ENCODE measurements at regions of chr17 and their contacts with region 1.

Region 1: DNA sequence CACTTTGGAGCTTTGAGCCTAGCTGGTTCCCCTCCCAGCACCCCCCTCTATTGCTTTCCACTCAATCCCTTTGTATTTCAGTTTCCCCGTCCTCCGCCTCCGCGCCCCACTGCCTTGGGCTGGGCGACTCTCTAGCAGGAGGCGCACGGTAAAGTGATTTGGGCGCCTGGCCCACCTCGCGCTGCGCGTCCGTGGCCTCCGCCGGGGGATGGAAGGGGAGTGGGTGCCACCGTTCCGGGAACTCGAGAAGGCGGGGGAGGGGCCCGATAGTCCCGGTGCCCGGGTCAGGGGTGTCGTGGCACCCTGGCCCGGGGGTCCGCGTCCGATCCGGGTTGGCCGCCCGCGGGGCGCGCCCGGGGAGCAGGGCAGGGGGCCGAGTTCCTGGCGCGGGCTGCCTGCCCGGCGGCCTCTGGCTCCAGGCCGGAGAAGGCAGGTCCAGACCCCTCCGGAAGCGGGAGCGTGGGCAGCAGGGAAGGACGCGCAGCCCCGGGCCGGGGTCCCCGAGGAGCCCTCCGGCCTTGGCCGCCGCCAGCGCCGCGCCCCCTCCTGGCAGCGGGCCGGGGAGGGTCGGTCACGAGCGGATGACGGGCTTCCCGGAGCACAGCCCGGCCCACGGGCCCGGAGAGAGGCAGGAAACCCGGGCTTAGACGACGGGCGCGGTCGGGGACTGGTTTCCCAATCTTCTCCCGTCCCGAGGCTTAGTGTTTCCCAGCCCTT is 15.8 kb downstream of the MEOX1 start:
- DNase-seq: peak; percentile 86
- ATAC-seq: peak; percentile 79 to 89 (median 88)
- H3K4me3 ChIP-seq: peak overlapping the region in 9 of 10 donors; percentile 36 to 56 (median 48)
- H3K27ac ChIP-seq: peak overlapping the region; percentile 86 to 97 (median 93)
- H3K4me1 ChIP-seq: peaks cover 0 to 82% (median 33%) of the 10 kb centered on the region in 9 donors
- H3K27me3 ChIP-seq: peaks cover 0 to 20% (median 0%) of the 10 kb centered on the region in 7 donors
- CTCF ChIP-seq: peak in 3 of 9 donors; percentile 11 to 43 (median 29)

Region 2: DNA sequence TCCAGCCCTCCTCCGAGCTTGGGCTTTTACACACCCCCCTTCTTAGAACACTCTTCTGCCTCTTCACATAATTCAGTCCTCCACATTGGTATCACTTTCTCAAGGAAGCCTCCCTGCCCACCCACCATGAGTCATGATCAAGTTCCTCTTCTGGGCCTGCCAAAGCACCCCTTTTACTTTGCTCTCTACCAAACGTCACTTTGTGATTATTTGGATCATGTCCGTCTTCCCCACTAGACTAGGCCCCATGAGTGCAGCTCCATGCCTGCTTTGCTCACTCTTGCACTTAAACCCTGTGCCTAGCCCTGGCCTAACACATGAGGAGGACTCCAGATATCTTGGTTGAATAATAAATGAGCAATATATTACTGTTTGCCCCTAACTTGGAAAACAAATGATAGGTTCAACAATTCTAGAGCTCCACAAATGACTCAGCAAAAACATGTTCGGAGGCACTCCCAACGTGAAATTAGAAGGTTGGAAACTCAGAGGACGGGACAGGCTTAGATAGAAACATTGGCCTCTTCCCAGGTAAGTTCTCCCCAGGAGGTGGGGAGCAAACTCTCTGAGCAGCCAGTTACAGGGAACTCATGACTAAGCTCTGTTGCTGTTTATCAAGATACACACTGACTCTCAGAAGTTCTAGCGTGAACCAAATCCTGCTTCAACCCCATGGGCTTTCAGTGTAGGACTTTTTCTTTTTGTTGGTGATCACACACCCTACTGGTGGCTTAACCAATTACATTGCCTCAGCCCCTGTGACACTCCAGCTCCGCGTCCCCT is 717.0 kb before region 1 on chr17:
- intact Hi-C with region 1: no loop called
- DNase-seq: peak in 1 of 2 donors; percentile 52
- ATAC-seq: peak; percentile 77 to 97 (median 95)
- H3K4me3 ChIP-seq: no peak overlapping the region
- H3K27ac ChIP-seq: peak overlapping the region in 7 of 10 donors; percentile 17 to 78 (median 45)
- H3K4me1 ChIP-seq: peaks cover 4 to 27% (median 12%) of the 10 kb centered on the region in 9 donors
- H3K27me3 ChIP-seq: no peaks in the 10 kb centered on the region
- CTCF ChIP-seq: peak; percentile 41 to 78 (median 72)

Region 3: DNA sequence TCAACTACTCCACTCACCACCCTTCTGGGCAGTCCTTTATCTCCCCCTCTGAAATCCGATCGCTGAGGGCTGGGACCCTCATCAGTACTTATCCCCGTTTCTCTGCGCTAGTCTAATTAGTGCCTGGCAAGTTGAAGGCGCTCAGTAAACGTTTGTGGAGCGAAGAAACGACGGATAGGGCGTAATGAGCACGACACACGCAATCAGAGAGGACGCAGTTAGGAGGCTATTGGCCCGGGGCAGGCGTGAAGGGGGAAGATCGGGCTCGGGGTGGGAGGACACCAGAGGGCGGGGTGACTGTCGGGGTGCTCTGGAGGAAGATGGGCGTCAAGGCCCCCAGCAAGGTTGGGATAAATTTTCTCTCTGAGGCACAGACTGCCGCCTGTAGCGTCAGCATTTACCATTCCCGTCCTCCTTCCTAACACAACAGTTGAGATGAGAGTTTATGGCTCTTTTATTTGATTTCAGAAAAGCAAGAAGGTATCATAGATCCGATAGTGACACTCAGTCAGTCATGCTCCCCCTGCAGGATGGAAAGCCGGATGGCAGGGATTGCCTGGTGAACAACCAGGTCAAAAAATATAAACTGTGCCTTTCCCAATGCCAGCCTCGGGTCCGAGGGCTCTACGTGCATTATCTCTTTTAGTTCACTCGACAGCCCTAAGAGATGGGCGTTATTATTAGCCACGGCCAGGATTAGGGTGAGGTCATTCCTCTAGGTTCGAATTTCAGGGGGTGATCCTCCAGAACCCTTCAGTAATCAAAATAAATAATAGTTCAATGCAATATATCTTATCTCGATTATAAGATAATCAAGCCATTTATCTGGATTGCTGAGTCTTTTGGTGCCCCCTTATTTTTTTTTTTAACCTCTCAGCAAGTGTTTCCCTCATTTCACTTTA is 256.6 kb before region 1 on chr17:
- intact Hi-C with region 1: no loop called
- DNase-seq: peak; percentile 76 to 85
- ATAC-seq: peak; percentile 78 to 88 (median 85)
- H3K4me3 ChIP-seq: peak overlapping the region; percentile 53 to 75 (median 66)
- H3K27ac ChIP-seq: peak overlapping the region; percentile 93 to 99 (median 98)
- H3K4me1 ChIP-seq: peaks cover 0 to 29% (median 18%) of the 10 kb centered on the region in 9 donors
- H3K27me3 ChIP-seq: no peaks in the 10 kb centered on the region
- CTCF ChIP-seq: peak; percentile 70 to 94 (median 87)

Region 4: GRCh38 chr17:43591779-43592562 is 54.0 kb before region 1 on chr17:
- intact Hi-C with region 1: loop called in 6 of 10 experiments (anchors 5 to 10 kb)
- DNase-seq: peak; percentile 79 to 92
- ATAC-seq: peak; percentile 83 to 91 (median 90)
- H3K4me3 ChIP-seq: peak overlapping the region in 3 of 10 donors; percentile 6 to 18 (median 16)
- H3K27ac ChIP-seq: peak overlapping the region; percentile 49 to 95 (median 88)
- H3K4me1 ChIP-seq: peaks cover 3 to 56% (median 39%) of the 10 kb centered on the region in 9 donors
- H3K27me3 ChIP-seq: no peaks in the 10 kb centered on the region
- CTCF ChIP-seq: peak in 1 of 9 donors; percentile 21

Measured in heart right ventricle (tissue), 16 donors.